Activated CD4-positive, alpha-beta T cell treated with anti-CD3 and anti-CD28 coated beads for 36 hours (primary cell): ENCODE measurements at regions of chr9 and their contacts with region 1.

Region 1: DNA sequence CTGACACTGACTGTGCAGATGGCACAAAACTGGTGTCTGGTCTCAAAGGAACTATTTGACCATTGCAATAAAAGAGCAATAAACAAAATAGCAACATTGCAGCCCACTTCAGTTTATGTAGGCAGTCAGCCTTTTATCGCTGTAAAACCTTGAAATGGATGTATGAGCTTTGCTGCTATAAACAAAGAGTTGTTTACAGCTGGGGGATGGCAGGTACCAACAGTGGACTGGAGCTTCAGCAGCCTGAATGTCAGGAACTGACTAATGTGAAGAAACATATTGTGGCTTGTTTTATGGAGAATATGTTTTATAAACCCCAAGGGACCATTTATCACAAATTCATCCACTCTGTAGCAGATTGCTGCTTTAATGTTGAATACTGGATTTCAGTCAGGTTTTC is 78.0 kb downstream of the PTPRD start:
- DNase-seq: no peak
- ATAC-seq: no peak
- H3K4me3 Mint-ChIP-seq: no peak overlapping the region
- H3K27ac Mint-ChIP-seq: no peak overlapping the region
- H3K4me1 Mint-ChIP-seq: no peaks in the 10 kb centered on the region
- H3K27me3 Mint-ChIP-seq: no peaks in the 10 kb centered on the region

Region 2: GRCh38 chr9:10366171-10366779 is 168.6 kb before region 1 on chr9:
- CTCF ChIA-PET with region 1: no interaction called
- POLR2A ChIA-PET with region 1: no interaction called
- intact Hi-C with region 1: no loop called
- DNase-seq: no peak
- ATAC-seq: no peak
- H3K4me3 Mint-ChIP-seq: no peak overlapping the region
- H3K27ac Mint-ChIP-seq: no peak overlapping the region
- H3K4me1 Mint-ChIP-seq: no peaks in the 10 kb centered on the region
- H3K27me3 Mint-ChIP-seq: no peaks in the 10 kb centered on the region

Region 3: GRCh38 chr9:10594482-10594881 is 59.6 kb after region 1 on chr9:
- CTCF ChIA-PET with region 1: no interaction called
- POLR2A ChIA-PET with region 1: no interaction called
- intact Hi-C with region 1: loop called in 1 of 2 experiments (anchors 10 kb)
- DNase-seq: no peak
- ATAC-seq: no peak
- H3K4me3 Mint-ChIP-seq: no peak overlapping the region
- H3K27ac Mint-ChIP-seq: no peak overlapping the region
- H3K4me1 Mint-ChIP-seq: no peaks in the 10 kb centered on the region
- H3K27me3 Mint-ChIP-seq: no peaks in the 10 kb centered on the region

Region 4: DNA sequence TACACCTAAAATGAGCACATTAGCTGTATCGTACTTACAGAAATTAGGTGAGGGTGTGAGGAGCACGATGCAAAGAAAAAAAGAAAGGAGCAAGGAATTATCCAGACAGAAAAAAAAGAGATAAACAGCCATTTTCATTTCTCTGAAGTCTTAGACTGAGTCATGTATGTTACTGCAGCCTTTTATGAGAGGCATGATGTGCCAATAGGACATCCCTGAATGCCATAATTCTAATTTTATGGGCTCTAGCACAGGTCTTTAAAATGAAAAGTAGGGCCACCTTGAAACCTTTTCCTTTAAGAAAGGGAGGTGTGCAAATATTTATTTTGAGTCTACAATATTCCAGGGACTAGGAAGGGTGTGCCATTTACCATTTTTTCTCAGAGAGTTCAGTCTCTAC is 152.1 kb after region 1 on chr9:
- CTCF ChIA-PET with region 1: no interaction called
- POLR2A ChIA-PET with region 1: no interaction called
- intact Hi-C with region 1: no loop called
- DNase-seq: no peak
- ATAC-seq: no peak
- H3K4me3 Mint-ChIP-seq: no peak overlapping the region
- H3K27ac Mint-ChIP-seq: no peak overlapping the region
- H3K4me1 Mint-ChIP-seq: no peaks in the 10 kb centered on the region
- H3K27me3 Mint-ChIP-seq: no peaks in the 10 kb centered on the region